ENCODE measurements at regions of chr4 and their contacts with region 1.

Region 1: DNA sequence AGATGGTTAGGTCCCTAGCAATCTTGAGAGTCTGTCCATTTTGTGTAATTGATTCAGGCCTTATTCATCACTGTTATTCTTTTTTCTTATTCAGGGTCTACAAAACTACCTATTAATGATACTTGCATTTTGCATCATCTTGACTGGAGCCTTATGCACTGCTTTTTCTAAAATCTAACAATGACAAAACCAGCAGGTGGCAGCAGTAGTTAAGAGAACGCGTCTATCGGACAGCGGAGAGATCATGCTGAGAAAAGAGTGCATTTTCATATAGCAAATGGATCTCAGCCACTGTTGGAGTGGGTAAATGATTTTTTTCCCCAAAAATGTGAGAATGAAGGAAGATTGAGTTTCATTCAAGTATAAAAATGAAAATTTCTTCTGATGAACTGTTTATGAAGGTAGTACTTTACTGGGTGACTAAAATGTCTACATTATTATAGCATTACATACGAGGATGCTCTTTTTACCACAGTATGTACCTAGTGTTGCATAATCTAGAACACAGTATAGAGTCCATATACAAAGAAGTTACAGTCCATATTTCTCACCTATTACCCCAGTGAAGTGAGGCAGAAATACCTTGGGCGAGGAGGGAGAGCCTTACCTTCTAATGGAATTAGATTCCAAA is 43.2 kb downstream of the TMEM144 start:
- DNase-seq: no peak
- ATAC-seq: peak; percentile 57 to 75
- H3K4me3 ChIP-seq: no peak overlapping the region
- H3K27ac ChIP-seq: no peak overlapping the region
- H3K4me1 ChIP-seq: peaks cover 11% of the 10 kb centered on the region
- H3K27me3 ChIP-seq: no peaks in the 10 kb centered on the region
- CTCF ChIP-seq: peak; percentile 62

Region 2: DNA sequence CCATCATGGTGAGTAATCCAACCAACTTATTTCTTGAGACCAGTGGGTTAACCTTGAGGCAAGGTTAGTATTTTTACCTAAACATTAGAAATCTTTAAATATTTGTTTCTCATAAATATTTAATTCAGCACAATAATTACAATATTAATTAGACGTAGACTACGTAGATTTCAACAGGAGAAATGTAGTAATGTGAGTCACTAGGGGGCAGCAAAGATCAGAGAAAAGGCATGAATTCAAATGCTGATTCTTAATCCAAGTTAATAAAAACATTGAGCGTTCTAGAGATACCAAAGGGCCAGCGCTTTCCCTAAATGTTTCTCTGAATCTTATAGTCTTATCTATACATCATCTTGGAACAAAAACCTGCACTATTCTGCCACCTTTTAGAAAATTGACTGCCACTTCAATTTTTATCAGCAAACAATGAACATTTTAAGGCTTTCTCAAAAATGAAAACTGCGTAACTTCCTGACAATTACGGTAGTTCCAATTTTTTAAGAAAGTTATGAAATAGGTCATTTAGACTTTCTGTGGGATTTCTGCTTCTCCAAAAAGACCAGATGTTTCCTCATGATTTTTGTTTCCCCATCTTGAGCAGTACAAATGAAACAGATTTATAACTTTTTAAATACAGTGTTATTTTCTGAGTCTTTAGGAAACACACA is 261.3 kb before region 1 on chr4:
- intact Hi-C with region 1: loop called (anchors 10 kb)
- DNase-seq: no peak
- ATAC-seq: peak; percentile 74 to 87
- H3K4me3 ChIP-seq: peak overlapping the region; percentile 38
- H3K27ac ChIP-seq: peak overlapping the region; percentile 66
- H3K4me1 ChIP-seq: peaks cover 6% of the 10 kb centered on the region
- H3K27me3 ChIP-seq: no peaks in the 10 kb centered on the region
- CTCF ChIP-seq: peak; percentile 71

Region 3: DNA sequence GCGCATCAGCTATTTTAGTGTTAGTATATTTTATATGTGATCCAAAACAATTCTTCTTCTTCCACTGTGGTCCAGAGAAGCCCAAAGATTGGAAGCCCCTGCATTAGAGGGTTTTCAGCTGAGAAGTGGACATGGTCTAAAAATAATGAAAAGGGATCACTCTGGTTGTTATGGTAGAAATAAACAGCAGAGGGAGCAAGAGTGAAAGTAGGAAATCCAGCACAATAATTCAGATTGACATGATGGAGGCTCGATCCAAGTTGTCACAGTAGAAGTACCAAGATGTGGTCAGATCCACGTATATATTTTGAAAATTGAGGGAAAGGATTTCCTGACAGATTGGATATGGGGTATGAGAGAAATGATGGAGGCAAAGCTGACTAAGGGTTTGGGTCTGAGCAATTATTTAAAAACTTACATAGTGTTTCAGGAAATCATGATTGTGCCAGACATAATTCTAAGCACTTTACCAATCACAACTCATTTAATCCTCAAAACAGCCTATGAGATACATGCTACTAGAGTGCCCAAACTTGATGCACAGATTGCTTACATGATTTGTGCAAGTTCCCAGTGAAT is 60.2 kb before region 1 on chr4:
- intact Hi-C with region 1: loop called (anchors 10 kb)
- DNase-seq: no peak
- ATAC-seq: peak; percentile 68 to 81
- H3K4me3 ChIP-seq: no peak overlapping the region
- H3K27ac ChIP-seq: no peak overlapping the region
- H3K4me1 ChIP-seq: no peaks in the 10 kb centered on the region
- H3K27me3 ChIP-seq: no peaks in the 10 kb centered on the region
- CTCF ChIP-seq: peak; percentile 59

Region 4: DNA sequence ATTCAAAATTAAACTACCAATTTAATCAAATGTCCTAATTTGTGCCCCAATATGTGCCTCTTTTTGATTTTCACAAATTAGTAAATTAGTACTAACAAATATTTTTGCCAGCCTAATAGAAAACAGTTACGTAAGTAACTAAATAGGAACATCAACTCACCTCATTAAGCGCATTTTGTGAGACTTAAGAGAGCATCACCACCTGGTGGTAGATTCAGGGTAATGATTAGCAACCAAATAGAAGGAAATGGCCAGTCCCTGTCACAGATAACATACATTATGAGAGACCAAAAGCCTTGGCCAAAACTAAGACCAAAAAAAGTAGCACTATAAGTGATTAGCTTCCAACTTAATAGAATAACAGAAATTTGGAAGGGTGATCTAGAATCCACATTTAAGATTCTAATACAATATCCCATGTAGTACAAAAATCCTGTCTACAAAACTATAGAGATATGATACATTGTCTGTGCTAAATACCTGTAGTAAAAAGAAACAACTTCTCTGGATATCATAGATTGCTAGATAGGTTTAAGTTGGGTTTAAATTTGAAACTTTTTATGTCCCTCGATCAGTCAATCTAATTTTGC is 371.5 kb after region 1 on chr4:
- intact Hi-C with region 1: loop called (anchors 10 kb)
- DNase-seq: no peak
- ATAC-seq: peak; percentile 68 to 77
- H3K4me3 ChIP-seq: no peak overlapping the region
- H3K27ac ChIP-seq: no peak overlapping the region
- H3K4me1 ChIP-seq: peaks cover 4% of the 10 kb centered on the region
- H3K27me3 ChIP-seq: no peaks in the 10 kb centered on the region
- CTCF ChIP-seq: peak; percentile 76